Caco-2 (cell line): ENCODE measurements at regions of chr15 and their contacts with region 1.

Region 1: GRCh38 chr15:66594344-66594743 is 28.5 kb upstream of the LCTL start:
- DNase-seq: peak in 1 of 2 experiments; percentile 21
- H3K4me3 ChIP-seq: no peak overlapping the region
- H3K4me3 Mint-ChIP-seq: no peak overlapping the region
- H3K27ac Mint-ChIP-seq: no peak overlapping the region
- H3K4me1 ChIP-seq: peaks cover 40% of the 10 kb centered on the region
- H3K4me1 Mint-ChIP-seq: peaks cover 20% of the 10 kb centered on the region
- H3K27me3 ChIP-seq: no peaks in the 10 kb centered on the region
- H3K27me3 Mint-ChIP-seq: no peaks in the 10 kb centered on the region
- CTCF ChIP-seq: no peak

Region 2: DNA sequence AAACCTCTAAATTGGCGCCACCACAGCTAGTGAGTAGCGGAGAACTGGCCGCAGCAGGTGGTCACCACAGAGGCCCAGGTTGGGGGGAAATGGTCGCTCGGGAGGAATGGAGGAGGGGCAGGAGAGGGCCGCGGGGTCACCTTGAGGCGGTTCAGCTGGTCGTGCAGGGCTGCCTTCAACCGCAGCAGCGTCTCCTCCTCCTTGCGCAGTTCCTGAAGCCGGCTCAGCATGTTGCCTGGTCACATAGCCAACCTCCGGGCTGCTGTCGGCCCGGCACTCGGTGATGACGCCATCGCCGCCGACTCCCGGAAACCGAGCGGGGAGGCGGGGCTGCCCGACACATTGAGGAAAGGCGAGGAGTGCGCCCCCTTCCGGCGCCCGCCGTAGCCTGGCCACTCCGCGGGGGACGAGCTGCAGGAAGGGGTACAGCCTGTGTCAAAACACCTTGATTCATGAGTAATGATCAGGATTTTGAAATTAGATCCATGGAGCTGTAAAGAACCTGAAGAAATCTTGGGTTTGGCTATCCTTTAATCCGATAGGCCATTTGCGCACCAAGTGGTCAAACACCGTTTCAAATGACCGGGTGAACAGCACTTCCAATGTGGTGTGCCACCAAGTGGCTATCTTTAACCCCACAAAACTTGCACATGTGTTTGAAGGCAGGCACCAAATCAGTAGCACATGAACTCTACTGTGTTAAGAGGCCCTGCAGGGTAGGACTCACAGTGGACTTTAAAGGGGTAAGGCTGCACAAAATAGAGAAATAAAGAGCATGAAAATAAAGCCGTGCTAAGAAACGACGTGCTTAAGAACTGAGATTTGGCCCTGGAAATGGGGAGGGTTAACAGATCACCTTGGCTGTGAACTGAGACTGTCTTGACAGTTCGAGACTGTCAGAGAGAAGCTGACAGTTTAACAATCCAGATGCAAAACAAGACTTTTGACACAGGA is 96.6 kb before region 1 on chr15 and contains the start of gene SNAPC5:
- CTCF ChIA-PET with region 1: interaction called, 3 read pairs
- POLR2A ChIA-PET with region 1: no interaction called
- intact Hi-C with region 1: loop called (anchors 5 kb)
- DNase-seq: peak; percentile 95 to 97
- H3K4me3 ChIP-seq: peak within 1 kb of the TSS; percentile 66
- H3K4me3 Mint-ChIP-seq: peak within 1 kb of the TSS; percentile 92
- H3K27ac Mint-ChIP-seq: peak within 1 kb of the TSS; percentile 93
- H3K4me1 ChIP-seq: peaks cover 4% of the 10 kb centered on the region; the same call in 1 of the 2 replicates
- H3K4me1 Mint-ChIP-seq: peaks cover 10% of the 10 kb centered on the region
- H3K27me3 ChIP-seq: no peaks in the 10 kb centered on the region
- H3K27me3 Mint-ChIP-seq: no peaks in the 10 kb centered on the region
- CTCF ChIP-seq: peak; percentile 88 to 96
- total RNA-seq, gene SNAPC5: 28.1 and 31.4 TPM in 2 replicates

Region 3: GRCh38 chr15:66619151-66619903 is 25.0 kb after region 1 on chr15:
- CTCF ChIA-PET with region 1: interaction called, 13 read pairs
- POLR2A ChIA-PET with region 1: no interaction called
- intact Hi-C with region 1: no loop called
- DNase-seq: peak; percentile 80 to 84
- H3K4me3 ChIP-seq: no peak overlapping the region
- H3K4me3 Mint-ChIP-seq: no peak overlapping the region
- H3K27ac Mint-ChIP-seq: no peak overlapping the region
- H3K4me1 ChIP-seq: peaks cover 20% of the 10 kb centered on the region
- H3K4me1 Mint-ChIP-seq: no peaks in the 10 kb centered on the region
- H3K27me3 ChIP-seq: no peaks in the 10 kb centered on the region
- H3K27me3 Mint-ChIP-seq: no peaks in the 10 kb centered on the region
- CTCF ChIP-seq: peak; percentile 76 to 90

Region 4: DNA sequence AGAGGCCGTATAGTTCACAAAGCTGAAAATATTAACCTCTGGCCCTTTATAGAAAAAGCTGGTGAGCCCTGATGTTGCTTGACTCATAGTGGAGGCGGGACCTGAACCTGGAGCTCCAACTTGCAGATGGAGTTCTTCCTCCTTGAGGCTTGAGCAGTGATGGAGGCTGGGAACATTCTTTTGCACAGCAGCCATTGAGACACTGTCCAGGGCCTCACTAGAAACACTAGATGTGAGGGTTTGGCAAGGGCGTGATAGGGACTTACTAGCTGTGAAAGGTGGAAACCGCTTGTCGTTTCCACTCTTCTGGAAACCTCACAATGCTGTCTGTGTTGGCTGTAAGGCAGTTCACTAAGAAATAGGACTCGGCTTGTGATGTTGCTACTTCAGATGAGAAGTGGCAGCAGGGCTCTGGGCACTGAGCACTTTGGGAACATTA is 120.2 kb after region 1 on chr15:
- CTCF ChIA-PET with region 1: no interaction called
- POLR2A ChIA-PET with region 1: no interaction called
- intact Hi-C with region 1: no loop called
- DNase-seq: no peak
- H3K4me3 ChIP-seq: no peak overlapping the region
- H3K4me3 Mint-ChIP-seq: no peak overlapping the region
- H3K27ac Mint-ChIP-seq: no peak overlapping the region
- H3K4me1 ChIP-seq: peaks cover 19% of the 10 kb centered on the region
- H3K4me1 Mint-ChIP-seq: peaks cover 18% of the 10 kb centered on the region
- H3K27me3 ChIP-seq: no peaks in the 10 kb centered on the region
- H3K27me3 Mint-ChIP-seq: no peaks in the 10 kb centered on the region
- CTCF ChIP-seq: no peak